Posterior cingulate gyrus (tissue), 11 donors: ENCODE measurements at regions of chr5 and their contacts with region 1.

Region 1: DNA sequence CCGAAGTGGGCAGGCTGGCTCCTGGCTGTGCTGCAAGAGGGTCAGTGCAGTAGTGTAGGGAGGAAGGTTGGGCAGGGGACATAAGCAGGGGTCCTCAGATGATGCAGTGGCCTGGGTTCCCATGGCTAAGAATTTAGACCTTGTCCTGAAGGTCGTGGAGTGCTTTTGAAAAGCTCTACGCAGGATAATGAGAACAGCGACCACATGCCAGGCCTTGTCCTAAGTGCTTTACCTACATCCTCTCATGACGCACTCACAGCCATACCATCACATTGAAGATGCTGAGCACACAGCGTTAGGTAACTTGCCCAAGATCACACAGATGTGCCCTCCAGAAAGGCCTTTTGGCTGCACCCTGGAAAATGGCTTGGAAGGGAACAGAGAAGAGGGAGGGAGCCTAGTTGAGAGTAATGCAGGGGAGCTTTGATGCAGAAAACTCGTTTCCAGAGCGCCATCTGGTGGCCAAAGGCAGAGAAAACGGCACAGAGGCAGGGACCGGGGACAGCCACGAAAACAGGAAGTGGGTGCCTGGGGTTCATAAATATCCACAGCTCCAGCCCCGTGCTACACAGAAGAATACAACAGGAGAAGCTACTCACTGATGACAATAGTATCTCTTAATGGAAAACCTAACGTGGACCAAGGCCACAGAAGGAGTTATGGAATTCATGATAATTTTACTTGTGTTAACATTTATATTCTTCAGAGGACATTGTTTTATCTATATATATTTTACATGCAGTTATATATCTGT is 2.6 kb upstream of the PCDH12 start:
- DNase-seq: peak; percentile 80 to 98 (median 92)

Region 2: DNA sequence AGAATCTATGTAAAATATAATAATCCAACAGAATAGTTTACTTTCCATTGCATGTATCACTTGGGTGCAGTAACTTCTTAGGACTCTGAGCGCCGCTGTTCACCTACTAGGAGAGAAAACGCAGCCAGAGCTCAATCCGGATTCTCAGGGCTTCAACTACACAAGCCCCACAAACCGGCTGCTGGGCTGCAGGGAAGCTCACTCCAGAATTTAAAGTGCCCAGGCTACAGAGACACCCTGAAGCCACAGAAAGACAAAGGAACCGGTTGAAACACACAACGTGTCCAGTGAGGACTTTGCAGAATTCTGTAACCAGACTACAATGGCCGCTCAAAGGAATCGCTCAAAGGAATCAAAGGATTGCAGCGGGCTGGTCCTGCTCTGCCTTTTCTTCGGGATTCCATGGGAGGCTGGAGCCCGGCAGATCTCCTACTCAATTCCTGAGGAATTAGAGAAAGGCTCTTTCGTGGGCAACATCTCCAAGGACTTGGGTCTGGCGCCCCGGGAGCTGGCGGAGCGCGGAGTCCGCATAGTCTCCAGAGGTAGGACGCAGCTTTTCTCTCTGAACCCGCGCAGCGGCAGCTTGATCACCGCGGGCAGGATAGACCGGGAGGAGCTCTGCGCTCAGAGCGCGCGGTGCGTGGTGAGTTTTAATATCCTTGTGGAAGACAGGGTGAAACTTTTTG is 547.6 kb before region 1 on chr5 and contains the start of gene PCDHGA10:
- intact Hi-C with region 1: no loop called
- DNase-seq: peak in 3 of 10 donors; percentile 6 to 75 (median 73)

Region 3: GRCh38 chr5:141664732-141665461 is 295.7 kb before region 1 on chr5:
- intact Hi-C with region 1: loop called (anchors 1 kb)
- DNase-seq: peak; percentile 49 to 96 (median 76)

Region 4: GRCh38 chr5:141691867-141692532 is 268.6 kb before region 1 on chr5:
- intact Hi-C with region 1: loop called (anchors 1 kb)
- DNase-seq: peak; percentile 80 to 98 (median 91)

Region 5: DNA sequence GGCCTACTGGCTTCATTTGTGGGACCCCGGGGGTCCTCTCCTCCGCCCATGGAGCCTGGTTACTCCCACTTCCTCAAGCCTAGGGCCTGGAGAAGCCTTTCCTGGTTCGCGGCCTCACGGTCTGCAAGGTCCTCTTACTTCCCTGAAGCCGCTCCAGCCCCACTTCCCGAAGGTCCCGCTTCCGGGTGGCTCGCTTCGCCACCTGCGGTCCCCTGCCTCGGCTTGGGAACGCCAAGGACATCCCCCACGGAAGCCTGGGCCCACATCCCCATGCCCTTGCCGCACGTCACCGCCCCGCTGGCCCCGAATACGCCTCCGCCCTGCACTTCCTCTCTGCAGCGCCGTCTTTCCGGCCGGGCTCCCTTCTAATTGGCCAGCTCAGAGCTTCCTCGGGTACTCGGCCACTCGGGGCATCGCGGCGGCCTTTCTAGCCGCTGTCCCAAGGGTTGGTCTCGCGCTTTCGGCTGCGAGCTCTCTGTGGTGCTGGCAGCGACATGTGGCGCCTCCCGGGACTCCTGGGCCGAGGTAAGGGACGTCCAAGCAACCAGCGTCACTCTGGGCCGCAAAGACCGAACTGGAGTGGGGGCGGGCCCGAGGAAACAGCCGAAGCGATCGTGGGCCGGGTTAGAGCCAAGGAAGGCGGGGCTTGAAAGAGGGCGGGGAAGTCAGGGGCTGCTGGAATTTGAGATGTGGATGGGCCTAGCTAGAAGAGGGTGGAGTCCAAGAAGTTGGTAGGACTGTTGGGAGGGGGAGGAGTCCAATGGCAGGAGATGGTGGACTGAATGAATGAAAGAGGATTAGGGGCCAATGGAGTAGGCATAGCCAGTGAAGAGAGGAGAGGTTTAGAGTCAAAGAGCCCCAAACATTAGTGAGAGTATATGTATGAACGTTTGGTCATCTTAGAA is 36.9 kb before region 1 on chr5 and contains the start of gene DELE1:
- intact Hi-C with region 1: loop called (anchors 2 kb)
- DNase-seq: peak; percentile 89 to 99 (median 94)